Activated naive CD4-positive, alpha-beta T cell treated with anti-CD3 and anti-CD28 coated beads, Interleukin-2, amount 10 ng/mL, durations not matched to agents 7 days and 5 days (primary cell): ENCODE measurements at regions of chr2 and their contacts with region 1.

Region 1: GRCh38 chr2:64914735-64915509 is 74.3 kb upstream of the SLC1A4 start:
- DNase-seq: no peak
- H3K4me3 Mint-ChIP-seq: no peak overlapping the region
- H3K27ac Mint-ChIP-seq: no peak overlapping the region
- H3K4me1 Mint-ChIP-seq: peaks cover 36% of the 10 kb centered on the region
- H3K27me3 Mint-ChIP-seq: peaks cover 4% of the 10 kb centered on the region

Region 2: DNA sequence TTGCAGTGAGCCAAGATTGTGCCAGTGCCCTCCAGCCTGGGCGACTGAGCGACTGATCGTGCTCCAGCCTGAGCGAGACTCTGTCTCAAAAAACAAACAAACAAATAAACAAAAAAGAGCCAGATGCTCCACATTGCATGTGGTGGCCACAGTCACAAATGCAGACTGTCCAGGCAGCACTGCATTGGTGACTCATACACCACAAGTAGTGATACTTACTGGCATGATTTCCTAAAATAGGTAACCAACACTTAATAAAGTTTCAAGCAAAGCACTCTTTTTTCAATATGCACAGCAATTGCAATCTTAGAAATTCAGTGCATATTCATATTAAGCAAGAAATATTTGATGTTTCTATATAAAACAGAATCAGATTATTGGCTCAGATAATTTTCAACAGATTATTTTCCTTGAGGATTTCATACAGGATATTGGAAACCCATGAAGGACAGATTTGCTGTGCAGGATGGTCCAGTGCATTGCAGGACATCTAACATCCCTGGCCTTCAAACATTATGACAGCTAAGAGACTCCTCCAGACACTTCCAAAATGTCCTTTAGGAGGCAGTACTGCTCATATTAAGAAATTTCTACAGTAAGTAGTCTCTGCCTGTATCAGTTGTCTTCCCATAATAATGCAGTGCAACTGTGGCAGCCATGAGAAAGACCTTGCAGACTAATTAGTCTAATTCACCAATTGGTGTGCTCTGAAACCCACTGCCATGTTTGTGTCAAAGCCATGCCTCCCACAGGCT is 63.8 kb after region 1 on chr2:
- CTCF ChIA-PET with region 1: interaction called, 17 read pairs
- DNase-seq: no peak
- H3K4me3 Mint-ChIP-seq: no peak overlapping the region
- H3K27ac Mint-ChIP-seq: no peak overlapping the region
- H3K4me1 Mint-ChIP-seq: peaks cover 28% of the 10 kb centered on the region
- H3K27me3 Mint-ChIP-seq: peaks cover 4% of the 10 kb centered on the region

Region 3: GRCh38 chr2:65015731-65016130 is 100.8 kb after region 1 on chr2:
- CTCF ChIA-PET with region 1: interaction called, 25 read pairs
- DNase-seq: no peak
- H3K4me3 Mint-ChIP-seq: no peak overlapping the region
- H3K27ac Mint-ChIP-seq: no peak overlapping the region
- H3K4me1 Mint-ChIP-seq: peaks cover 12% of the 10 kb centered on the region
- H3K27me3 Mint-ChIP-seq: no peaks in the 10 kb centered on the region

Region 4: GRCh38 chr2:65040400-65041261 is 125.7 kb after region 1 on chr2:
- CTCF ChIA-PET with region 1: interaction called, 35 read pairs
- DNase-seq: peak; percentile 87
- H3K4me3 Mint-ChIP-seq: no peak overlapping the region
- H3K27ac Mint-ChIP-seq: no peak overlapping the region
- H3K4me1 Mint-ChIP-seq: peaks cover 24% of the 10 kb centered on the region
- H3K27me3 Mint-ChIP-seq: peaks cover 3% of the 10 kb centered on the region